ENCODE measurements at regions of chr3 and their contacts with region 1.

Region 1: GRCh38 chr3:105473521-105474223 is 107.0 kb downstream of the ALCAM start:
- DNase-seq: no peak
- H3K4me3 ChIP-seq: no peak overlapping the region
- H3K27ac ChIP-seq: no peak overlapping the region
- H3K4me1 ChIP-seq: no peaks in the 10 kb centered on the region
- H3K27me3 ChIP-seq: no peaks in the 10 kb centered on the region
- CTCF ChIP-seq: no peak
- POLR2A ChIP-seq: no peak

Region 2: GRCh38 chr3:103494011-103494410 is 1979.7 kb before region 1 on chr3:
- intact Hi-C with region 1: no loop called
- DNase-seq: no peak
- H3K4me3 ChIP-seq: no peak overlapping the region
- H3K27ac ChIP-seq: no peak overlapping the region
- H3K4me1 ChIP-seq: no peaks in the 10 kb centered on the region
- H3K27me3 ChIP-seq: peaks cover 0 to 4% of the 10 kb centered on the region in 2 donors
- CTCF ChIP-seq: no peak
- POLR2A ChIP-seq: no peak

Region 3: GRCh38 chr3:105243076-105243475 is 230.6 kb before region 1 on chr3:
- intact Hi-C with region 1: loop called (anchors 5 kb)
- DNase-seq: no peak
- H3K4me3 ChIP-seq: no peak overlapping the region
- H3K27ac ChIP-seq: no peak overlapping the region
- H3K4me1 ChIP-seq: no peaks in the 10 kb centered on the region
- H3K27me3 ChIP-seq: no peaks in the 10 kb centered on the region
- CTCF ChIP-seq: no peak
- POLR2A ChIP-seq: no peak

Region 4: DNA sequence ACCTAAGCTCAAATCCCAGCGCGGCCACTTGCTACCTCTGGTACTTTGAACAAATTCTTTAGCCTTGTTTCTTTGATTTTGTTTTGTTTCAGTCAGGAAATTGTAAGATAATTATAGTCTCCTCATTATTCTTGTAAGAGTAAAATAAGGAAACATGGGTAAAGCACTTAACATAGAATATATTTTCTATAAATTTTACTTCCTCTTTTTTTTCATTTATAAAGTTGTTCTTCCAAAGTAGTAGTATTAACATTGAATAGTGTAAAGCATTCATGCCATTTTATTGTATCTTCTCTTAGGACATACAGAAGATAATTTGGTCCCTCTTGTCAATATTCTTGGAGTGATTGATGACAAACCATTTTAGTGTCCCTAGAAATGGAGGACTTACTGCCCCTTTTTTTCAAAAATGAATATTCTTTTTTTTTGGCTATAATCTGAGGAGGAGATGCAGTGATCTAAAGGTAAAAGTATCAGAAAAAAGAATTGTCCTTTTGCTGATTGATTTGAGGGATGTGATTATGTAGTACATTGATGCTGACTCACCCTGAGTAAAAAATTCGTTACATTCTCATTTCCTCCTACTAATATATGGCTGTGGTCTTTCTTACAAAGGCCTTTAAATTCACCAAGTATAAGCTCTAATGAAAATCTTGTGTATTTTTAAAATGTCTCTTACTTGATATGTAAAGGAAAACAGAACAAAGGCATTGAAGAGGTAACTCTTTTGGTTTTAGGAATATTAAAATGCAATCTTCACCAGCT is 56.0 kb before region 1 on chr3:
- intact Hi-C with region 1: no loop called
- DNase-seq: no peak
- H3K4me3 ChIP-seq: no peak overlapping the region
- H3K27ac ChIP-seq: no peak overlapping the region
- H3K4me1 ChIP-seq: no peaks in the 10 kb centered on the region
- H3K27me3 ChIP-seq: no peaks in the 10 kb centered on the region
- CTCF ChIP-seq: no peak
- POLR2A ChIP-seq: no peak

Region 5: DNA sequence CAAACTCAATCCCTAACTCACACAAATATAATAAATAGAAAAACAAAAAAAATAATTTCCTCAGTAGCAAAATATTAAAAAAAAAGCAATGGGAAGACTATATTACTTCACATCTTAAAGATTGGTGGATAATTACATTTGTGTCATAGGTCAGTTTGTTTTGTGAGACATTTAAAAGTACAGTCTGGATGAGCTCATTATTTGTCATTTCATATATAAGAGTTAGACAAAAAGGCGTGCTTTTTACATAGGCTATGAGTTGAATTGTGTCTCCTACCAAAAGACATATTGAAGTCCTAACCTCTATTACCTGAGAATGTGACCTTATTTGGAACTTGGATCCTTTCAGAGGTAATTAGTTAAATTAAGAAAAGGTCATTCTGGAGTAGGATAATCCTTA is 1105.2 kb after region 1 on chr3:
- intact Hi-C with region 1: no loop called
- DNase-seq: no peak
- H3K4me3 ChIP-seq: no peak overlapping the region
- H3K27ac ChIP-seq: no peak overlapping the region
- H3K4me1 ChIP-seq: no peaks in the 10 kb centered on the region
- H3K27me3 ChIP-seq: no peaks in the 10 kb centered on the region
- CTCF ChIP-seq: no peak
- POLR2A ChIP-seq: no peak